ENCODE measurements at regions of chr11 and their contacts with region 1.

Region 1: DNA sequence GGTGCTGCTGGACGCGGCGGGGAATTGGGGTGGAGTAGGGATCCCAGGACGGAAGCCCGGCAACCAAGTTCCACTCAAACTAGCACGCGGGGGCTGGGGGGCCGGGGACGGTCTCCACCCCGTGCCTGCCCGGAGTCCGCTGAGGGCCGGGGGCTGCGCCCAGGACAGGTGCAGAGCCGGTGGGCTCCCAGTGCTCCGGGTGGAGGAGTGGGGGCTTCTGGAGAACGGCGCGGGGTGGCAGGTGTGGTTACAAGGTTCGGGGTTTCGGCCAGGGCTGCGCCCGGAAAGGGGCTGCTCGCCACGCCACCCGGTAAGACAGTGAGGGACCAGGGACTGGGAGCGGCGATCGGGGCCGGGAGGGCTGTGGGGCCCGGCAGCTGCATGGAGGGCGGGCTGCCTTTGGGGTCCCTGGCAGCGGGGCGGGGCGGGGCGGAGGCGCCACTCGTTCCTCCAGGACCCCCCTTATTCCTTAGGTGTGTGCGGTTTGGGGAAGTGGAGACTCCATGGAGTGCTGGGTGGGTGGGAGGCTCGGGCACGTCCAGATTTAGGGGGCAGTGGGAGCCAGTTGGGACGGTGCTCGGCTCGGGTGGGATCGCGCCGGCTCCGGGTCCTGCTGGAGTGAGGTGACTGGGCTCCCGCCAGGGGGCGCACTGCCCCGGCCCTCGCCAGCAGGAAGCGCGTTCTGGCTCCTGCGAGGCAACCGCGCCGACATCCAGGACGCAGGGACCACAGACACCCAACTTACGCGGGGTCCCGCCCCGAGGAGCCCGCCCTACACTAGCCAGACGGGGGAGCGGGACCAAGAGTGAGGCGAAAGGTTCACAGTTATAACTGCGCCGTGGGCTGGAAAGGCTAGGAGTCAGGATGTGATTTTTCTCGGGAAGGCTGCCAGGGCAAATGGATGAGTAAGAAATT is 868 bp downstream of the TSPAN18 start:
- DNase-seq: peak; percentile 92
- ATAC-seq: peak; percentile 88

Region 2: GRCh38 chr11:44565211-44565952 is 162.2 kb before region 1 on chr11 and contains the start of gene CD82:
- intact Hi-C with region 1: loop called (anchors 5 kb)
- DNase-seq: peak; percentile 100
- ATAC-seq: peak; percentile 97
- total RNA-seq, gene CD82: 47.7 TPM

Region 3: DNA sequence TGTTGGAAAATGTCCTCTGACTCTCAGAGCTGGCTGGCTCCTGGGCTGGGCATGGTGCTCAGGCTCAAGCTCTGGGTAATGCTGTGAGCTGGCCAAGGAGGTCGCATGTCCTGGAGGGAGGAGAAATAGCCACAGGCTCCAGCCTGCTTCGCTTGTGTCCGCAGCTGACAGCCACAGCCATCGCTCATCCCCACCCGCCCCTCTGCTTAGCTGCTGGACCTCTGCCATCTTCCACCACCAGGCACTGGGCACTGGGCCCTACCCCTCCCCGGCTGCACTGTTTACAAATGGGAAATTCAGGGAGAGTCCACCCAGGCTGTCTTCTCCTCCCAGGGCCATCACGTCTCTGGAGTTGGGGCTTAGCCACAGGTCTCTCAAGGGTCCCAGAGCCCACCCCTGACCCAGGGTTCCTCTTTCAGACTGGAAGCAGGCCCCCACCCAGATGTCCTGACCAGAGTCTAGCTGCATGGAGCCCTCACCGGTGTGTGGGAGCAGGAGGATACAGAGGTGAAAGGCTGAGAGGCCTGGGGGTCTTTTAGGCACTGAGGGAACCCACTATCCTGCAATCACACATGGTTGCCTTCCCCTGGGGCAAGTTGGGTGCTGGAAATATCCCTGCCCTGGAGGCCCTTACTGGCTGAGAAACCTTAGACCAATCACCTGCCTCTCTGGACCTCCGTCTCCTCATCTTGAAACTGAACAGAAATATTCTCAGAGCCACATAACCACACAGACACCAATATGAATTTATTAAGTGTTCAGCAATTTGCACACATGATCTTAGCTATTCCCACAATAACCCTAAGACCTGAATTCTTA is 99.5 kb before region 1 on chr11:
- intact Hi-C with region 1: loop called (anchors 1 kb)
- DNase-seq: peak; percentile 82
- ATAC-seq: peak; percentile 86

Region 4: DNA sequence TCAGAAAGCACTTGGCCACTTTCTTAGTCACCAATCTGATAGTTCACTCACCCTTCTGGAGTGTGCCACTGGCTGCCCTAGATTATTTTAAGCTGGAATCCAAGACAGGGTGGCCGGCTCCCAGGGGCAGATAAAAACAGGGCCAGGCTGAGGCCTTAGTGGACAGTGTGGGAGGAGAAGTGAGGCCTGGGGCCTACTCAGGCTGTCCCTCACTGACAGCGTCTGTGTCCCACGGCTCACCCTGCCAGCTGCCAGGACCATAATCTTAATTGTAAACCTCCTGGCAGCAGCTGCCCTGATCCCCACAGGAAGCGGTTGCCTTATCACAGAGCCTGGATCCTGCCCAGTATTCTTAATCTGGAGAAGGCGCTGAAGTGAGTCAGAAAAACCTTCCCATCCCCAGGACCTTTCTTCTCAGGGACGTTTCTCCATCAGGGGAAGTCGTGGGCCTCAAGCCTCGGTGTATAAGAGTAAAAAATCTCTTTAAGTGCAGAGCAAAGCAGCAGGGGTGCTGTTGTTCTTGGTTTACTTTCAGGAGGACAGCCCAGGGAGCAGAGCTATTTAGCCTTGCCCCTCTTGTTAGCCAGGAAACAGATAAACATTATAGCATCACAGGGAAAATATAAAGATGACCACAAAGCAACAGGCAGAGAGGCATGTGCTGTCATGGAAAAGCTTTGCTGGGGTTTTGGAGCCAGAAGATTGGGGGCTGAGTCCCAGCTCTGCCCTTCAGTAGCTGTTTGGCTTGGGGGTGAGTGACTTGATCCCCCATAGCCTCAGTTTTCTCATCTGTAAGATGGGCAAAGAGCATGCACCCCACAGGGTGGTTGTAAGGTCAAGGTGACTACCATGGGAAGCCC is 38.7 kb after region 1 on chr11:
- intact Hi-C with region 1: loop called (anchors 2 kb)
- DNase-seq: peak; percentile 85
- ATAC-seq: peak; percentile 86

Region 5: GRCh38 chr11:44775366-44775984 is 47.8 kb after region 1 on chr11:
- intact Hi-C with region 1: loop called (anchors 2 kb)
- DNase-seq: peak; percentile 67
- ATAC-seq: peak; percentile 27

Region 6: GRCh38 chr11:44797941-44798606 is 70.4 kb after region 1 on chr11:
- intact Hi-C with region 1: no loop called
- DNase-seq: no peak
- ATAC-seq: peak; percentile 9

Region 7: GRCh38 chr11:44861849-44862749 is 134.5 kb after region 1 on chr11:
- intact Hi-C with region 1: no loop called
- DNase-seq: peak; percentile 77
- ATAC-seq: peak; percentile 80

Region 8: GRCh38 chr11:44893846-44894617 is 166.4 kb after region 1 on chr11:
- intact Hi-C with region 1: loop called (anchors 1 kb)
- DNase-seq: peak; percentile 75
- ATAC-seq: peak; percentile 89

Region 9: GRCh38 chr11:44911029-44911814 is 183.6 kb after region 1 on chr11:
- intact Hi-C with region 1: loop called (anchors 1 kb)
- DNase-seq: peak; percentile 75
- ATAC-seq: peak; percentile 74

Region 10: DNA sequence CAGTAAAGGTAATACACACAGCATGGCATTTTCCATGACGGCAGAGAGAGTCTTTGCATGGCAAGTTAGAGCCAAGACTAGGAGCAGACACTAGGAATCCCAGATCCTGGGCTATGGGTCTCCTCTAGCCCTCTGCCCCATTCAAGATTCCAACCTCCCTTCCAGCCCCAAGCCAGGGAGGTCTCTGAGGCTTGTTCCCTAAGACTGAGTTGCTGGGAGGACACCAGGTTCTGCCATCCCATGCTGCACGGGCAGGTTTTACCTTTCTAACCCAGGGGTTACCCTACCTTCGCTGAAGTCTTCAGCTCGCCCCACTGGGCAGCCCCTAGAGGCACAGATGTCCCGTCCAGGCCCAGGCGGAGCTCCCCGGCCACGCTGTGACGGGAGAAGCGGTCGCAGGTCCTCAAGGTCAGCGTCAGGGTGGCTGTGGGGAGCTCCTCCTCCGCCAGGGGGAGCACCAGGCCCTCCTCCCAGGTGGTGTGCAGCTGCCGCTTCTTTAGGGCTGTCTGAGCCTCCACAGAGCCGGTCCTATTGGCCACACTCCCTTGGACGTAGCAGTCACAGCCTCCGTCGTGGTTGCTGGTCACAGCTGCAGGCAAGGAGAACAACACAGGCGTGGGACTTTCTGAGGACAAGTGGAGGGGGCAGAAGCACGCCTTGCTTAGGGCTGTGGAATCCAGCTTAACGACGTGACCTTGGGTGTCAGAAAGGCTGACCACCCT is 524.7 kb after region 1 on chr11:
- intact Hi-C with region 1: no loop called
- DNase-seq: peak; percentile 82
- ATAC-seq: peak; percentile 84